ENCODE measurements at regions of chr14 and their contacts with region 1.

Region 1: DNA sequence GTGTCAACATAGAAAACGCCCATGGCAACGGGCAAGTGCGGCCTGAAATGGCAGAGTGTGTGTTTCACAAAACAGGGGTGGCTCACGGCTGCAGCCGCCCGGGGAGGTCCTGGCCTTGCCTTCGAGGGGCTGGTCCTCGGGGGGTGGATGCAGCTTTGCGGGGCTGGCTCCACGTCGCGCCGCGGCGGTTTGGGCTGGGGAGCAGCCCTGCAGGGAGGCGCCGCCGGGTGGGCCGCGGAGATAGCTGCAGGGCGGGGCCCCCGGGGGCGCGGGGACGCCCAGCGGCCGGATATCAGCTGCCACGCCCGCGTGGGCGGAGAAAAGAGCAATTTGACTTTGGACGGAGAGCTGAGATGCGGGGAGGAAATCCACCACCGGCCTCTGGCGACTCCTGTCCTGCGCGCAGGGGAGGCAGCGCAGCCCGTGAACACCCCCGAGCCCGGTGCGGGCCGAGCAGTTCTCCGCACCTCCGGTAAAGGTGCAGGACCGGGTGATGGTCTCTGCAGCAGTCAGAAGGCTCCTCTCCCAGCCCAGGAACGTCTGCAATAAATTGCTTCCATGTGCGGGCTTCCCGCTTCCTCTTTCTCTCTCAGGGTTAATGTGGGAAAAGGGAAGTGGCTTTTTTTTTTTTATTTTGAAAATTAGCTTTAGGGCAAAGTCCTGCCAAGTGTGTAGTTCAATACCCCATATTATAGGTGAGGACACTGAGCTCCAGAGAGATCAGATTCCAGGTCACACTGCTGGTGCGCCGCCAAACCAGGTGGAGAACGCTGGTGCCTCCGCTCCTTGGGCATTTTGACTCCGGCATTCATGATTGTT is 110.5 kb downstream of the ARF6 start:
- DNase-seq: peak; percentile 88
- H3K4me3 Mint-ChIP-seq: peak overlapping the region; percentile 77
- H3K27ac Mint-ChIP-seq: peak overlapping the region; percentile 98
- H3K4me1 Mint-ChIP-seq: peaks cover 76% of the 10 kb centered on the region
- H3K27me3 Mint-ChIP-seq: no peaks in the 10 kb centered on the region

Region 2: GRCh38 chr14:49867831-49868723 is 135.3 kb before region 1 on chr14:
- CTCF ChIA-PET with region 1: interaction called, 134 read pairs
- POLR2A ChIA-PET with region 1: interaction called, 327 read pairs
- DNase-seq: peak; percentile 99
- H3K4me3 Mint-ChIP-seq: peak overlapping the region; percentile 90
- H3K27ac Mint-ChIP-seq: peak overlapping the region; percentile 98
- H3K4me1 Mint-ChIP-seq: peaks cover 26% of the 10 kb centered on the region
- H3K27me3 Mint-ChIP-seq: no peaks in the 10 kb centered on the region

Region 3: DNA sequence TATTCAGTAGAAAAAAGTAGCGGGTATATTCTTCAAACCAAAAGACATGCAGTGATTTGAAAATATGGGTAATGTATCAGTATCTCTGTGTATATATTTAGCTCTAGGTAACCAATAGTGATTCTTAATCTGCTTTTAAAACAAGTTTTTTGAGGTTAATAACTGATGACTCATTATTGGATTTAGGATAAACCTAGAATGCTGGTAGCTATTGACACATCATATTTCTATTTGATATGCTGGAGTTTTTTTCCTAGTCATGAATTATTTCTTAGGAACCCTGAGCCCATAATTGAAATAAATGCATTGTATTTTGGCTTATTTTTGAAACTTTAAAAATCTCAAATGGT is 95.0 kb before region 1 on chr14:
- CTCF ChIA-PET with region 1: interaction called, 5 read pairs
- POLR2A ChIA-PET with region 1: interaction called, 49 read pairs
- DNase-seq: no peak
- H3K4me3 Mint-ChIP-seq: peak overlapping the region; percentile 21
- H3K27ac Mint-ChIP-seq: peak overlapping the region; percentile 49
- H3K4me1 Mint-ChIP-seq: peaks cover 45% of the 10 kb centered on the region
- H3K27me3 Mint-ChIP-seq: no peaks in the 10 kb centered on the region

Region 4: GRCh38 chr14:49924852-49925251 is 78.6 kb before region 1 on chr14:
- CTCF ChIA-PET with region 1: no interaction called
- POLR2A ChIA-PET with region 1: no interaction called
- DNase-seq: no peak
- H3K4me3 Mint-ChIP-seq: no peak overlapping the region
- H3K27ac Mint-ChIP-seq: no peak overlapping the region
- H3K4me1 Mint-ChIP-seq: peaks cover 5% of the 10 kb centered on the region
- H3K27me3 Mint-ChIP-seq: no peaks in the 10 kb centered on the region

Region 5: GRCh38 chr14:49982501-49982951 is 20.9 kb before region 1 on chr14:
- CTCF ChIA-PET with region 1: interaction called, 3 read pairs
- POLR2A ChIA-PET with region 1: interaction called, 630 read pairs
- DNase-seq: no peak
- H3K4me3 Mint-ChIP-seq: peak overlapping the region; percentile 43
- H3K27ac Mint-ChIP-seq: peak overlapping the region; percentile 78
- H3K4me1 Mint-ChIP-seq: peaks cover 75% of the 10 kb centered on the region
- H3K27me3 Mint-ChIP-seq: no peaks in the 10 kb centered on the region

Region 6: DNA sequence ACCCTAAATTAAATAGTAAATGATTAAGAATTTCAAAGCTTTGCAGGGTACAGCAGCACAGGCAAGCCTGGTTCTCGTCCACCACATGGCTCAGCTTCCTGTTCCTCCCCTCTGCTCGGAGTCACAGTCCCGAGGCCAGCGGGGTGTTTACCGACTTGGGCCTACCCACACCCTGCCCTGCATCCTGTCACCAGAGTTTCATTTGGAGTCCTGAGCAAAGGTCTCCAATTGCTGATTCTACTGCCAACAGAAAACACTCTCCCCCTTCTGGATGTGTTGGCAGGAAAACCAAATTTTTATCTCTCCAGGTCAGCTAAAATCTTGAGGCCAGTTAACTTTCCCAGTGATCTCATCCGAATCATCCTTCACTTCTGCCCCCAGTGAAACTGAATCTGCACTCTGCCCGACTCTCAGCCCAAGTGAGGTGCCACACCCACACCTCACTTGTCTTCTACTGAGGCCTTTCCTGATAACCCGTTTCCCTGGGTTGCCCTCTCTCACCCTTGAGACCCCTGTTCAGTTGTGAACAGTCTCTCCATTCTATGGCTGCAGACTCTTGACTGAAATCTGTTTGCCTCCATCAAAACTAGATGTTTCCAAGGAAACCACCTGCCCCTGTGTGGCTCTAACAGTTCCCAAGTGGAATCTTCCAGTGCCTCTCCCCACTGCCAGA is 41.8 kb after region 1 on chr14:
- CTCF ChIA-PET with region 1: interaction called, 59 read pairs
- POLR2A ChIA-PET with region 1: interaction called, 209 read pairs
- DNase-seq: peak; percentile 89
- H3K4me3 Mint-ChIP-seq: peak overlapping the region; percentile 6
- H3K27ac Mint-ChIP-seq: peak overlapping the region; percentile 92
- H3K4me1 Mint-ChIP-seq: peaks cover 70% of the 10 kb centered on the region
- H3K27me3 Mint-ChIP-seq: no peaks in the 10 kb centered on the region

Region 7: DNA sequence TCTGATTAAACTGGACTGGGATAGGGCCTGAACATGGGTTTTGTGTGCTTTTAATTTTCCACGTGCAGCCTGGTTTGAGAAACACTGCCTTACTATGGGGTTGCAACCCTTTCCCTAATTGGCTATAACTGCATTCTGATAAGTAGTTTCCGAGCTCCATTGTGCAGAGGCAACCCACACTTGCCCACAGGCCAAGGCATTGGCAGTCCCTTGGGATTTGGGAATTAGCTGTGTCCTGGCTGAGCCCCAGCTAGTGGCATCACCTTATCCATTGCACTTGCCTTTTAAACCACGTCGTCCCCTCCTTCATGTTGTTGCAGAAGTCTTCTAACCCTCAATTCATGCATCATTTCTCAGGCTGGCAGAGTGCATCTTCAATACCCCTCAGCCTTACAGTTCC is 102.8 kb after region 1 on chr14:
- CTCF ChIA-PET with region 1: interaction called, 7 read pairs
- POLR2A ChIA-PET with region 1: interaction called, 39 read pairs
- DNase-seq: no peak
- H3K4me3 Mint-ChIP-seq: no peak overlapping the region
- H3K27ac Mint-ChIP-seq: no peak overlapping the region
- H3K4me1 Mint-ChIP-seq: peaks cover 31% of the 10 kb centered on the region
- H3K27me3 Mint-ChIP-seq: no peaks in the 10 kb centered on the region

Region 8: GRCh38 chr14:50489489-50490250 is 486.2 kb after region 1 on chr14:
- CTCF ChIA-PET with region 1: no interaction called
- POLR2A ChIA-PET with region 1: no interaction called
- DNase-seq: no peak
- H3K4me3 Mint-ChIP-seq: no peak overlapping the region
- H3K27ac Mint-ChIP-seq: no peak overlapping the region
- H3K4me1 Mint-ChIP-seq: peaks cover 2% of the 10 kb centered on the region
- H3K27me3 Mint-ChIP-seq: no peaks in the 10 kb centered on the region

Measured in activated CD4-positive, alpha-beta memory T cell treated with anti-CD3 and anti-CD28 coated beads, Interleukin-2, amount 10 ng/mL, durations not matched to agents 7 days and 5 days (primary cell).